Heart left ventricle (tissue), 16 donors: ENCODE measurements at regions of chr18 and their contacts with region 1.

Region 1: GRCh38 chr18:32674491-32674890 is 98.3 kb downstream of the KLHL14 start:
- DNase-seq: no peak
- ATAC-seq: peak in 1 of 4 donors; percentile 41
- H3K4me3 ChIP-seq: no peak overlapping the region
- H3K27ac ChIP-seq: no peak overlapping the region
- H3K4me1 ChIP-seq: no peaks in the 10 kb centered on the region
- H3K27me3 ChIP-seq: no peaks in the 10 kb centered on the region
- CTCF ChIP-seq: no peak
- POLR2A ChIP-seq: no peak

Region 2: GRCh38 chr18:32520771-32521170 is 153.7 kb before region 1 on chr18:
- intact Hi-C with region 1: no loop called
- DNase-seq: no peak
- ATAC-seq: no peak
- H3K4me3 ChIP-seq: no peak overlapping the region
- H3K27ac ChIP-seq: no peak overlapping the region
- H3K4me1 ChIP-seq: no peaks in the 10 kb centered on the region
- H3K27me3 ChIP-seq: no peaks in the 10 kb centered on the region
- CTCF ChIP-seq: no peak
- POLR2A ChIP-seq: no peak

Region 3: GRCh38 chr18:32612301-32613048 is 62.0 kb before region 1 on chr18:
- intact Hi-C with region 1: no loop called
- DNase-seq: no peak
- ATAC-seq: no peak
- H3K4me3 ChIP-seq: no peak overlapping the region
- H3K27ac ChIP-seq: no peak overlapping the region
- H3K4me1 ChIP-seq: peaks cover 0 to 8% (median 0%) of the 10 kb centered on the region in 12 donors
- H3K27me3 ChIP-seq: no peaks in the 10 kb centered on the region
- CTCF ChIP-seq: no peak
- POLR2A ChIP-seq: no peak

Region 4: GRCh38 chr18:32730620-32731091 is 56.2 kb after region 1 on chr18:
- intact Hi-C with region 1: loop called in 1 of 10 experiments (anchors 10 kb)
- DNase-seq: no peak
- ATAC-seq: no peak
- H3K4me3 ChIP-seq: peak overlapping the region in 10 of 12 donors; percentile 6 to 46 (median 32)
- H3K27ac ChIP-seq: peak overlapping the region in 1 of 12 donors; percentile 14
- H3K4me1 ChIP-seq: no peaks in the 10 kb centered on the region
- H3K27me3 ChIP-seq: no peaks in the 10 kb centered on the region
- CTCF ChIP-seq: no peak
- POLR2A ChIP-seq: no peak

Region 5: DNA sequence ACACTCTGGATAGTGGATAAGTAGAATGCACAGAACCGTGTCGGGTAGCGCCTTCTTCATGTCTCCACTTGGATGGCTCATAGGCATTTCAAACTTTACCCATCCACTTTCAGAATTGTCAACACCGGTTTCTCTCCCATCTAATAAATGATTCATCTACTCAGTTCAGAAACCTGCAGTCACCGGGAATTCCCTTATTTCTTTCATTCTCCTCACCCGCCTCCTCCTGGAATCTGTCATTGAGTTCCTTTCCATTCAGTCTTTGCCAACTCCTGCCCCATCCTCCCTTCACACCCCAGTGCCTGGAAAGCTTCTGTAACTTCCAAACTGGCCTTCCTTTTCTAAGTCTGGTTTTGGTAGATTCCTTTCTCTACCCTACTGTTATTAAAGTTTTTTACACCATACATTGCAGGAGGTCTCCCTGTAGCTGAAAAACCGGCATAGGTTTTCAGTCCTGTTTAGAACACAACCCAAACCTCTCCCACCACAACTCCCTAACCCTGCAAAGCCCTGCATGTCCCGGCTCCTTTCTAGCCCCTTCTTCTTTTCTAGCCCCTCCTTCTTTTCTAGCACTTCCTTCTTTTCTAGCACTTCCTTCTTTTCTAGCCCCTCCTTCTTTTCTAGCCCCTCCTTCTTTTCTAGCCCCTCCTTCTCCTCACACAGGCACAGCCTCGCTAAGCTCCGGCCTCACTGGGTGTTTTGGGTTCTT is 232.2 kb after region 1 on chr18:
- intact Hi-C with region 1: no loop called
- DNase-seq: no peak
- ATAC-seq: no peak
- H3K4me3 ChIP-seq: no peak overlapping the region
- H3K27ac ChIP-seq: no peak overlapping the region
- H3K4me1 ChIP-seq: no peaks in the 10 kb centered on the region
- H3K27me3 ChIP-seq: no peaks in the 10 kb centered on the region
- CTCF ChIP-seq: no peak
- POLR2A ChIP-seq: no peak